ENCODE measurements at regions of chr11 and their contacts with region 1.

Region 1: GRCh38 chr11:34357701-34358257 is at the start of gene ABTB2:
- DNase-seq: peak; percentile 94
- ATAC-seq: peak; percentile 84
- H3K4me3 ChIP-seq: peak within 1 kb of the TSS; percentile 76 to 93 (median 91)
- H3K27ac ChIP-seq: peak within 1 kb of the TSS; percentile 83
- H3K4me1 ChIP-seq: peaks cover 55% of the 10 kb centered on the region
- H3K27me3 ChIP-seq: no peaks in the 10 kb centered on the region; a peak in 1 of 5 replicates
- CTCF ChIP-seq: no peak
- EP300 ChIP-seq: no peak
- POLR2A ChIP-seq: peak; percentile 90 to 95
- RAD21 ChIP-seq: no peak; the same call in 1 of the 2 replicates
- total RNA-seq, gene ABTB2: 5.1 TPM in 2 replicates

Region 2: GRCh38 chr11:34149786-34150185 is 208.0 kb before region 1 on chr11:
- CTCF ChIA-PET with region 1: interaction called, 21 read pairs
- POLR2A ChIA-PET with region 1: interaction called, 4 read pairs
- in situ Hi-C with region 1: no loop called
- intact Hi-C with region 1: no loop called
- DNase-seq: no peak
- ATAC-seq: peak; percentile 69
- H3K4me3 ChIP-seq: no peak overlapping the region
- H3K27ac ChIP-seq: no peak overlapping the region
- H3K4me1 ChIP-seq: no peaks in the 10 kb centered on the region
- H3K27me3 ChIP-seq: no peaks in the 10 kb centered on the region
- CTCF ChIP-seq: peak; percentile 63
- EP300 ChIP-seq: no peak
- POLR2A ChIP-seq: no peak
- RAD21 ChIP-seq: peak; percentile 64; the same call in 1 of the 2 replicates

Region 3: GRCh38 chr11:34250732-34251639 is 106.8 kb before region 1 on chr11:
- CTCF ChIA-PET with region 1: no interaction called
- POLR2A ChIA-PET with region 1: interaction called, 14 read pairs
- in situ Hi-C with region 1: no loop called
- intact Hi-C with region 1: no loop called
- DNase-seq: no peak
- ATAC-seq: no peak
- H3K4me3 ChIP-seq: no peak overlapping the region
- H3K27ac ChIP-seq: no peak overlapping the region
- H3K4me1 ChIP-seq: peaks cover 39% of the 10 kb centered on the region
- H3K27me3 ChIP-seq: no peaks in the 10 kb centered on the region
- CTCF ChIP-seq: no peak
- EP300 ChIP-seq: no peak
- POLR2A ChIP-seq: no peak
- RAD21 ChIP-seq: no peak

Region 4: DNA sequence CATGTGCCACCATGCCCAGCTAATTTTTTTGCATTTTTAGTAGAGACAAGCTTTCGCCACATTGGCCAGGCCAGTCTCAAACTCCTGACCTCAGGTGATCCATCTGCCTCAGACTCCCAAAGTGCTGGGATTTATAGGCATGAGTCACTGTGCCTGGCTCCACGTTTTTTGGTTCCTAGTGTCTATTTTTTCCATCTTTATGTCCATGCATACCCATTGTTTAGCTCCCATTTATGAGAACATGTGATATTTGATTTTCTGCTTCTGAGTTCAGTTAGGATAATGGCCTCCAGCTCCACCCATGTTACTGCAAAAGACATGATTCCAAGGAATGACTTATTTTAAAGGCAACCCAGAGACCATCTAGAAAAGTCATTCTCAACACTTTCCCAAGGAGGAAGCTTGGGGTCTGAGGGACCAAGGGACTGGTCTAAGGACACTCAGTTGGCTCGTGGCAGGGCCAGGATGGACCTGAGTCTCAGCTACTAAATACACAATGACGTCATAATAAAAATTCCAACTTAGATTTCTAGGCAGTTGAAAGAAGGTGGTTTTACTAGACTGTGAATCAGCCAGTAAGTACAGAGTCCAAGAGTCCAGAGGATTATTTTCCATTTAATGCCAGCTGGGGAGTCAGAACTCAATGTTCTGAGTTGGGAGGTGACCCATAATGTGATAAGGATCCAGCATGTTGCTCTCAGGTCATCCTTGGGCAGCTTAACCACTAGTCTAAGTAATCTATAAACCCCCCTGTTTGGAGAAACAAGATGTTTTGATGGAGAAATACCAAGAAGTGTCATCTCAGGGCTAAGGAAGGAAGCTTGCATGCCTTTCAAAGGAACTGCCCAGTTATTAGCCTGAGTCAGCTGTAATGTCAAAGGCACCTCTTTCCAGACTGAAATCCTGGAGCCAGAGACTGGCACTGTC is 39.4 kb before region 1 on chr11:
- CTCF ChIA-PET with region 1: no interaction called
- POLR2A ChIA-PET with region 1: interaction called, 20 read pairs
- in situ Hi-C with region 1: no loop called
- intact Hi-C with region 1: loop called (anchors 5 kb)
- DNase-seq: peak; percentile 72
- ATAC-seq: peak; percentile 65
- H3K4me3 ChIP-seq: no peak overlapping the region
- H3K27ac ChIP-seq: no peak overlapping the region
- H3K4me1 ChIP-seq: peaks cover 68% of the 10 kb centered on the region
- H3K27me3 ChIP-seq: no peaks in the 10 kb centered on the region
- CTCF ChIP-seq: no peak
- EP300 ChIP-seq: no peak; a peak in 1 of 4 replicates
- POLR2A ChIP-seq: no peak
- RAD21 ChIP-seq: no peak

Region 5: GRCh38 chr11:34438529-34439507 is 81.0 kb after region 1 on chr11 and contains the start of gene CAT:
- CTCF ChIA-PET with region 1: interaction called, 3 read pairs
- POLR2A ChIA-PET with region 1: interaction called, 7 read pairs
- in situ Hi-C with region 1: no loop called
- intact Hi-C with region 1: loop called (anchors 5 kb)
- DNase-seq: peak; percentile 92
- ATAC-seq: peak; percentile 95
- H3K4me3 ChIP-seq: peak within 1 kb of the TSS; percentile 64 to 88 (median 84)
- H3K27ac ChIP-seq: peak within 1 kb of the TSS; percentile 92
- H3K4me1 ChIP-seq: peaks cover 58% of the 10 kb centered on the region
- H3K27me3 ChIP-seq: no peaks in the 10 kb centered on the region; a peak in 1 of 5 replicates
- CTCF ChIP-seq: 0 out of 2 replicates have a peak, but pooled peaks have one; percentile 9
- EP300 ChIP-seq: peak in 1 of 2 experiments; percentile 21; a peak in 1 of 4 replicates
- POLR2A ChIP-seq: peak; percentile 83 to 95
- RAD21 ChIP-seq: no peak
- total RNA-seq, gene CAT: 136 and 180 TPM in 2 replicates